AG04449 (cell line): ENCODE measurements at regions of chr20 and their contacts with region 1.

Region 1: GRCh38 chr20:20466341-20466879 is 98.5 kb downstream of the INSM1 start:
- DNase-seq: peak; percentile 41
- H3K4me3 ChIP-seq: no peak overlapping the region
- CTCF ChIP-seq: no peak

Region 2: GRCh38 chr20:20130399-20130798 is 336.0 kb before region 1 on chr20:
- CTCF ChIA-PET with region 1: no interaction called
- POLR2A ChIA-PET with region 1: no interaction called
- DNase-seq: no peak
- H3K4me3 ChIP-seq: no peak overlapping the region
- CTCF ChIP-seq: no peak

Region 3: DNA sequence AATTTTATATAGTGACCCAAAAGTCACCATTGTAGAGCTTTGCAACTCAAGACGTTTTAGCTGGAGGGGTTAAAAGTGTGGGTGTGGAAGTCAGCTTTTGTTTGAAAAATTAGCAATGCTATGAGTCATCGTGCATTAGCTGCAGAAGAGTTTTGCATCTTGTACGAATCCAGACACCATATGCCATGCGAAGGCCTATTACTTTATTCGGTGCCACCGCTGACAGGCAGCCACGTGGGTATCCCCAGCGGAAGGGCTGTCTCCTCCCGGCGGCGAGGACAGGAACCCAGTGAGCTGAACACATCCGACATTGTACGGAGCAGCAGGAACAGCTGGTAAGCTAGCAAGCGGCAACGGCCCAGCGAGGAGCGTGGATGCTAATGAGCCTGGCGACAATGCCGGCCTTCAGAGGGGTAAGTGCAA is 14.1 kb before region 1 on chr20:
- CTCF ChIA-PET with region 1: interaction called, 23 read pairs
- POLR2A ChIA-PET with region 1: no interaction called
- DNase-seq: peak; percentile 5
- H3K4me3 ChIP-seq: peak overlapping the region; percentile 21
- CTCF ChIP-seq: no peak

Region 4: DNA sequence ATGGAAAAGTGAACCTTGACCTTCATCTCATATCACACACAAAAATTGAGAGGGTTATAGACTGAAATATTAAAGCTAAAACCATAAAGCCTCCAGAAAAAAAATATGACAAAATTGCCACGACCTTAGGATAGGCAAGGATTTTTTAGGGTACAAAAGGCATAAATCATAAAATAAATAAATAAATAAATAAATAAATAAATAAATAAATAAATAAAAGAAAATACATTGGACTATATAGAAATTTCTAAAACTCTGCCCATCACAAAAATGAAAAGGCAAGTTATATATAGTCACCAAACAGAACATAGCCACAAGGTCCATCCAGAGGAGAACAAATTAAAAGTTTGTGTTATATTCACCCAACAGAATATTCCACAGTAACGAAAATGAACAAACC is 10.1 kb after region 1 on chr20:
- CTCF ChIA-PET with region 1: interaction called, 12 read pairs
- POLR2A ChIA-PET with region 1: no interaction called
- DNase-seq: no peak
- H3K4me3 ChIP-seq: no peak overlapping the region
- CTCF ChIP-seq: no peak